Right ventricle myocardium inferior (tissue), 1 donor: ENCODE measurements at regions of chr3 and their contacts with region 1.

Region 1: DNA sequence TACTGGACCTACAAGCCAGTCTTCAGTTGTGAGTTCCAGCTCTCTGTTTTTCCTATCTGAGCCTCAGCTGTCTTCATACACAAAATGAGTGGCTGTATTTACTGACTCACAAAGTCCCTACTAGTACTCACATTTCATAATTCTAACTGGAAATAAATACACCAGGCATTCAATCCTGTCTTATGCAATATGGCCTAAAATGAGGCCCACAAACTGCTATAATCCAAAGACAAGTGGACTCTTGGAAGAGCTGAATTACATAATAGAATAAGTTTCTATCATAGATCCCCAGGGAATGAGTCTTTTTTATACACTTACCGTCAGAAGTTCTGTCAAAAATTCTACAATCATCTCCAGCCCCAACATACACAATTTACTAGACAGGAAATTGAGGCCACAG is 211.9 kb downstream of the LRRN1 start:
- DNase-seq: no peak
- ATAC-seq: no peak

Region 2: DNA sequence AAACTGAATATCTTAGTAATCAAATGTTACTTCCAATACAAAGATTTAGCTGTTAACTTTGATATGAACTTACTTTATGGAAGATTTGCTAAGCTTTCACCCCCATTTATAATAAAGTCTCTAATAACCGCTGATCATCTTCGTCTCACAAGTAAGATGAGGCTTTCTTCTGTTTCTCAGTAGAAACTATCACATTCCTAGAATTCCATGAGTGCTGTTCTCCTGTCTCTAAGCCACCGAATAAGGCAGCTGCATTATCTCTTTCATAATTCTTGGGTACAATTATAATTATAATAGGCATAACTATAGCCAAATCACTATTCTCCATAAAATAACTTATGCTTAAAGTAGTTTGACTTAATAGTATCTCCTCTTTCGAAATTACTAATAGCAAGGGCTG is 273.7 kb after region 1 on chr3:
- intact Hi-C with region 1: loop called (anchors 10 kb)
- DNase-seq: no peak
- ATAC-seq: no peak